ENCODE measurements at regions of chr2 and their contacts with region 1.

Region 1: GRCh38 chr2:149017116-149017985 is 21.1 kb upstream of the LYPD6B start:
- DNase-seq: peak; percentile 31
- H3K4me3 ChIP-seq: no peak overlapping the region
- CTCF ChIP-seq: peak; percentile 78

Region 2: GRCh38 chr2:149006883-149007540 is 10.3 kb before region 1 on chr2:
- CTCF ChIA-PET with region 1: interaction called, 35 read pairs
- POLR2A ChIA-PET with region 1: interaction called, 3 read pairs
- DNase-seq: no peak
- H3K4me3 ChIP-seq: no peak overlapping the region
- CTCF ChIP-seq: no peak

Region 3: GRCh38 chr2:149040451-149040850 is 23.1 kb after region 1 on chr2:
- CTCF ChIA-PET with region 1: interaction called, 37 read pairs
- POLR2A ChIA-PET with region 1: interaction called, 3 read pairs
- DNase-seq: no peak
- H3K4me3 ChIP-seq: no peak overlapping the region
- CTCF ChIP-seq: peak; percentile 46

Region 4: DNA sequence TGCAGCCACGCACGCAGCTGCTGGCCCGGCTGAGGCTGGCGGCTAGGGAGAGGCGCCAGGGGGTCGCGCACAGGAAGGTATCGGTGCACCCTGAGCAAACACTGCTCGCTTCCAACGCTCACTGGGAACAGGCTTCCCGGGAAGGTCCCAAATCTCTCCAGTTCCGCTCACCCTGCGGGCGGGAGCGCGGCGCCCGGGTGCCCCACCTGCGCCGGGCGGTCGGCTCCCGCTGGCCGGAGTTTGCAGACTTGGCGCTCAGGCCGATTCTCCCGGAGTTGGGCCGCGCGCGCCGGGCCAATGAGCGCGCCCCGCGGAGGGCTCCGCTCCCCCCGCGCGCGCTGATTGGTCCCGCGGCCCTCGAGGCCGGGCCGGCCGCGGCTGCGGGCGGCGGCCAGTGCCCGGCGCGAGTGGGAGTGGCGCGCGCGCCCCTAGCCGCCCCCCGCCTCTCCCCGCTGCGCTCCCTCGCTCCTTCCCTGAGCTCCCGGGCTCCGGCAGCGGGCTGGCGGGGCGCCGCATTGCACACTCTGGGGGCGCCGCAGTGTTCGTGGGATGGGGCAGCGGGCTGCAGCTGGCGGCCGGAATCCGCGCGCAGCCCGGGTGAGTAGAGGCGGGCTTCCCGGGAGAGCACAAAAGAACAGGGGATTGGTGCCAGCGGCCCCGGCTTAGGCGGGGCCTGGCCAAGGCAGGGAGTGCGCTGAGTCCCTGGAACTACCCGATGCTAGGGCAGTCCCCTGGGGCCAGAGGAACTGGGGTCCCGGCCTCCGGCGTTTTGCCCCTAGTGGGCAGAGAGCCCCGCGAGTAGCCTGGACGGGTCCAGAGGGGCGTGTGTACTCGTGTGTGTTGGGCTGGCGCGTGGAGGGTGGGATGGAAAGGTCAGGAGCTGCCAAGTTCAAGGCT is 313.0 kb after region 1 on chr2 and contains the start of gene LYPD6:
- CTCF ChIA-PET with region 1: interaction called, 36 read pairs
- POLR2A ChIA-PET with region 1: no interaction called
- DNase-seq: no peak
- H3K4me3 ChIP-seq: peak within 1 kb of the TSS; percentile 71
- CTCF ChIP-seq: no peak

Region 5: GRCh38 chr2:149540138-149540537 is 522.8 kb after region 1 on chr2:
- CTCF ChIA-PET with region 1: interaction called, 10 read pairs
- POLR2A ChIA-PET with region 1: no interaction called
- DNase-seq: no peak
- H3K4me3 ChIP-seq: no peak overlapping the region
- CTCF ChIP-seq: no peak

Region 6: GRCh38 chr2:149573760-149574159 is 556.4 kb after region 1 on chr2:
- CTCF ChIA-PET with region 1: interaction called, 73 read pairs
- POLR2A ChIA-PET with region 1: no interaction called
- DNase-seq: no peak
- H3K4me3 ChIP-seq: no peak overlapping the region
- CTCF ChIP-seq: peak; percentile 3

Measured in AG04449 (cell line).